ENCODE measurements at regions of chr1 and their contacts with region 1.

Region 1: GRCh38 chr1:167599957-167600581 is 30.0 kb upstream of the RCSD1 start:
- DNase-seq: peak; percentile 75
- H3K4me3 Mint-ChIP-seq: no peak overlapping the region
- H3K27ac Mint-ChIP-seq: no peak overlapping the region
- H3K4me1 Mint-ChIP-seq: peaks cover 10% of the 10 kb centered on the region
- H3K27me3 Mint-ChIP-seq: no peaks in the 10 kb centered on the region
- CTCF ChIP-seq: peak; percentile 73

Region 2: DNA sequence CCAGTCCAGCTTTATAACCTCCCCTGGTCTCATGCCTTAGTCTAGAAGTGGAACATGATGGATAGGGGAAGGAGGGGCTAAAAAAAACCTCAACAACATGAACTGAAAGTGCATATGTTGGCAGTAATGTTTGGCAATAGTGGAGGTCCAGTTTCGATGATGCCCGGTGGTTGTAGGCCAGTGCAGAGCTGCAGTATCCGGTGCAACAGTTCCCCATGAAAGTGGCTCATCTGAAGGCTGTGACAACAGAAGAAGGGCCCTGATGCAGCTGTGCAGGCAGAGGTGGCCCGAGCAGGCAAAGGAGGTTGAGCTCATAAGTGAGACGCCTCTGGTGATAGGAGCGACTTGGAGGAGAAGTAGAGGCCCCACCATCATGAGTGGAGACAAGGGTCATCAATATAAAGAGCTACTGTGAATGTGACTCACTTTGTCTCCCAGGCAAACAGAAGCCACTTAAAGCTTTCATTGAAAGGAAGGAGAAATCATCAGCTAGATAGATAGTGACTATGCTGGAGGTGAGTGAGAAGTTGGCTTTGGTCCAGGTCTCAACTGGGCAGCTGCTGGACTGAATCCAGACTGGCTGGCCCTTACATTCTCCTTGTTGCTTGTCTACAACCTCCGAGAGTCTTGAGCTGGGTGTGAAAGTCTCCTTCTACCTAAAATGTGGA is 36.4 kb before region 1 on chr1:
- CTCF ChIA-PET with region 1: interaction called, 20 read pairs
- POLR2A ChIA-PET with region 1: interaction called, 5 read pairs
- intact Hi-C with region 1: no loop called
- DNase-seq: peak; percentile 79
- H3K4me3 Mint-ChIP-seq: peak overlapping the region; percentile 64
- H3K27ac Mint-ChIP-seq: peak overlapping the region; percentile 85
- H3K4me1 Mint-ChIP-seq: peaks cover 46% of the 10 kb centered on the region
- H3K27me3 Mint-ChIP-seq: no peaks in the 10 kb centered on the region
- CTCF ChIP-seq: no peak

Region 3: DNA sequence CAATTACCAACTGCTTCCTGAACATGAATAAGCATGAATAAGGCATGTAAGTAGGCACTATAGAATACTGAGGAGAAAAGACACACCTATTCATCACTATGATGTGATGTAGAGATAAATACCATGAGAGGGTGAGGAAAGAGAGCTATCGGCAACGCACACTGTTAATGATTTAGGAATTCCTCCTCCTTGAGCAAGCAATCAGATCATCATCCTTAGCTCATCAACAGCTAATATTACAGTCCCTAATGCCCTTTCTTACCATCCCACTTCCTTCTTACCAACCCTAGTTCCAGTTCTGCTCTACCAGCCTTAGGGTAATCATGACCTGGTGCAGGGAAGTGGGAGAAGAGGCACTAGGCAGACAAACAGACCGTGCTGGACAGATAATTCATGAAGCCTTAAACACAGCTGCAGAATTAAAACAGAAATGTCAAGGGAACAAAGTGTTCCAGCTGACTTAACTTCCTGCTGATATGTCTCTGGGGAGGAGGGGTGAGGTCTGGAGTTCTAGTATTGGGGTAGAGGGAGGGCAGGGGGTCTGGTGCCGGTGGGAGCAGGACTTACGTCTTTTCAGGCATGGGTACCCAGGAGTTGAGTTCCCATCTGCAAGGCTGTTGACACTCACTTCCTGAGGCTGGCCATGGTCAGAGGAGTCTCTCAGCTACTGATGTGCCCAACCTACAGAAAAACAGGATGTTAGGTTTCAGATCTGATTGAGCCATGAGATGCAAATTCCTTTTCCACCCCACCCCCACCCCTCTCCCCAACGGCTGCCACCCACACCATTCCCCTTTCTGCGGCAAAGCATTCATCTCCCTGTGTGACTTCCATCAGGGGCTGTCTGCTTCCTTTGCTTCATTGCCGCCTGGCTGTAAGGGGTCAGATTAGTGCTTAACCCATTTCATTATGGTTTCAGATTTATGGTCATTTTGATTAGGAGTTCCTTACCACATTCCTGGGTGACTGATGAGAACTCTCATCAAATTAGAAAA is 17.4 kb after region 1 on chr1:
- CTCF ChIA-PET with region 1: interaction called, 28 read pairs
- POLR2A ChIA-PET with region 1: interaction called, 8 read pairs
- intact Hi-C with region 1: no loop called
- DNase-seq: no peak
- H3K4me3 Mint-ChIP-seq: peak overlapping the region; percentile 0
- H3K27ac Mint-ChIP-seq: peak overlapping the region; percentile 16
- H3K4me1 Mint-ChIP-seq: peaks cover 32% of the 10 kb centered on the region
- H3K27me3 Mint-ChIP-seq: no peaks in the 10 kb centered on the region
- CTCF ChIP-seq: no peak

Region 4: GRCh38 chr1:167669209-167670124 is 69.4 kb after region 1 on chr1:
- CTCF ChIA-PET with region 1: interaction called, 31 read pairs
- POLR2A ChIA-PET with region 1: interaction called, 19 read pairs
- intact Hi-C with region 1: no loop called
- DNase-seq: peak; percentile 45
- H3K4me3 Mint-ChIP-seq: no peak overlapping the region
- H3K27ac Mint-ChIP-seq: no peak overlapping the region
- H3K4me1 Mint-ChIP-seq: peaks cover 57% of the 10 kb centered on the region
- H3K27me3 Mint-ChIP-seq: no peaks in the 10 kb centered on the region
- CTCF ChIP-seq: no peak

Region 5: DNA sequence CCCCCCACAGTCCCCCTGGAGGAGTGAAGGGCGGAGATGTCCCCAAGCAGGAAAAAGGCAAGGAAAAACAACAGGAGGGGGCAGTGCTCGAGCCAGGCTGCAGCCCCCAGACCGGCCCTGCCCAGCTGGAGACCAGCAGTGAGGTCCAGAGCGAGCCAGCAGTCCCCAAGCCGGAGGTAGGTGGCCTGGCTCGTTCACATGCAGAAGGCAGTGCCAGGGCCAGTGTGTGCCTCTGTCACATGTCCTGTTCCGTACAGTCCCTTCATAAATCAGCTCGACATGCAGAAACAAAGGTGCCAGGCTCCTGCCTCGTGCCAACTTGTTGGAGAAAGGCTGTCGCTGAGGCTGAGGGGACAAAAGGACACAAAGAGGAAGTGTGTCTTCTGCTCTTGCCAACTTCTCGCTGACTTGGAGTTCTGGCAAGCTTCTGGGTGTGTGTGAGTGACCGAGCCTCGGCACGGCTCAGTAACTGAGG is 97.6 kb after region 1 on chr1:
- CTCF ChIA-PET with region 1: interaction called, 83 read pairs
- POLR2A ChIA-PET with region 1: no interaction called
- intact Hi-C with region 1: no loop called
- DNase-seq: no peak
- H3K4me3 Mint-ChIP-seq: no peak overlapping the region
- H3K27ac Mint-ChIP-seq: no peak overlapping the region
- H3K4me1 Mint-ChIP-seq: peaks cover 6% of the 10 kb centered on the region
- H3K27me3 Mint-ChIP-seq: peaks cover 3% of the 10 kb centered on the region
- CTCF ChIP-seq: no peak

Region 6: GRCh38 chr1:167797015-167797414 is 196.9 kb after region 1 on chr1:
- CTCF ChIA-PET with region 1: interaction called, 11 read pairs
- POLR2A ChIA-PET with region 1: interaction called, 9 read pairs
- intact Hi-C with region 1: no loop called
- DNase-seq: peak; percentile 100
- H3K4me3 Mint-ChIP-seq: peak overlapping the region; percentile 57
- H3K27ac Mint-ChIP-seq: peak overlapping the region; percentile 83
- H3K4me1 Mint-ChIP-seq: peaks cover 63% of the 10 kb centered on the region
- H3K27me3 Mint-ChIP-seq: no peaks in the 10 kb centered on the region
- CTCF ChIP-seq: peak; percentile 12